Ovary (tissue), 10 donors: ENCODE measurements at regions of chr2 and their contacts with region 1.

Region 1: GRCh38 chr2:74919827-74920226 is 38.6 kb upstream of the POLE4 start:
- DNase-seq: peak; percentile 24 to 72 (median 64)
- H3K4me3 ChIP-seq: no peak overlapping the region
- H3K27ac ChIP-seq: no peak overlapping the region
- H3K4me1 ChIP-seq: no peaks in the 10 kb centered on the region
- H3K27me3 ChIP-seq: no peaks in the 10 kb centered on the region
- CTCF ChIP-seq: peak; percentile 49 to 58 (median 57)
- EP300 ChIP-seq: no peak
- POLR2A ChIP-seq: no peak

Region 2: DNA sequence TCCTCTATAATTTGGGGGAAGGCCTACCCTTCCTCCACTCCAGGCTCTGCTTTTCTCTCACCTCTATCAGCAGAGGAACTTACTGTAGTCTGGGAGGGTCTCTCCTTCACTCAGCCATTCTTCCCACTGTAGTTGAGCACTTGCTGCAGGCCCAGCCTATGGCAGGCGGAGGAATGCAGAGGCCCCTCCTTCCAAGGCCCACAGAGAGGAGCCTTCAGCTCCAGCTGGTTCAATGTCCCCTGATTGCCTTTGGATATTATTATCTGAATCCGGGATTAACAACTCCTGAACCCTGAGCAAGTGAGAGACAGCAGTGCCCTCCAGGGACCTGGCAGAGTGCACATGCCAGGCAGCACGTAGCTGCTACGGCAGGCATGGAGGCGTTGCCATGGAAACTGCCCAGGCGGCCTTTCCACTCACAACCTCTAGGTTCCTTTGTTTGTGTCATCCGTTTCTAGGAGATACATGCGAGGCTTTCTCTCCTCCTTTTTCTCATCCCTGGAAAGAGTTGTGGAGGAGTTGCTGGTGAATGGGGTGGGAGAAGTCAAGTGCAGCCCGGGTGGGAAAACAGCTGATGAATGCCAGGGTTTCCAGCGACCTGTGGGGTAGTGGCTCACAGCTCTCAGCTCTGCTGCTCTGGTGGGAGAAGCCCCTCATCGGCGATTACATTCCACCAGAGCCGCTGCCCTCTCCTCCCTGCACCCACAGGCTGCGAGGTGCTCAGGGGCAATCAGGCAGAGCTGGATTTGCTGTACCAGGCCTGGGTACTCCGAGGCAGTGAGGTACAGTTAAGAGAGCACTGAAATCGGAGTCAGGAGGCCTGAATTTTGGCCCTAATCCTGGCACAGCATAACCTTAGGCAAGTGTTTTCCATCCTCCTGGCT is 141.2 kb before region 1 on chr2:
- intact Hi-C with region 1: no loop called
- DNase-seq: peak in 1 of 5 donors; percentile 35
- H3K4me3 ChIP-seq: no peak overlapping the region
- H3K27ac ChIP-seq: no peak overlapping the region
- H3K4me1 ChIP-seq: no peaks in the 10 kb centered on the region
- H3K27me3 ChIP-seq: no peaks in the 10 kb centered on the region
- CTCF ChIP-seq: no peak
- EP300 ChIP-seq: no peak
- POLR2A ChIP-seq: no peak

Region 3: DNA sequence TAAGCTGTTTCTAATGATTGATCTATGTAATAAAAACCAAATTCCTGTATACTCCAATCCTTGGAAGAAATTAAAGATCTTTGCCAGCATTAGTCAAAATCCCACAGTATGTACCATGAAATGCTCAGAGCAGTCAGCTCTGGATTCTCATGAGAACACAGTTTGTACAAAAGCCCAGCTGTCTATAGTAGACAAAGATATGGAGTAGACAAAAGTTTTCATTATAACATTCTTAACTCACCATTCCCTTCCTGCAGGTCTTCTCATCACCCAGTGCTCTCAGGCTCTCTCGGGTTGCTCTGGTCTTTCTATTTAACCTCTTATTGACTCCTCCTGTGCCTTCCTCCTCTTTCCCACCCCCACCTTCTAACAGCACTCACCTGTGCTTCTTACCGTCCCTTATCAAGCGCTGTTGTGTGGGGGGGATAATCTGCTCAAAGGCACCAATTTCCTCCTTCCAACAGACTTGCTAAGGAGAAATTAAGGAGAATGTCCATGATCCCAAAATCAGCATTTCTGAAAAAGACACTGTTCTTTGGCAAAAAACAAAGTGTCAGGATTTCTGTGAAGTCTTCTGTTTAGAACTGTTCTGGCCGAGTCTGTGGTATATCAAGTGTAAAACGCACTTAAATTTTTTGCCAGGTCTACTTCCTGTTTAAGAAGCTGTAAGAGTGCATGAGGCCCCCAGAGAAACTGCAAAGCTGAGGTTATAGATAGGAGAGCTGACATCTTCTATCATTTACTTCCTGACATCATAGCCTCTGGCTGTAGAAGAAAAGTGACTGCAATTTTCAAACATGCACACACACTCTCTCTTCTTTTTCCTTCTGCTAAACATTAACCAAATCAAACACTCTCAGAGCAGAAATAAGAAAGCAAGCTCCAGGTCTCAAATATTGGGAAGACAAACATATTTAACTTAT is 496.9 kb after region 1 on chr2:
- intact Hi-C with region 1: loop called in 1 of 4 experiments (anchors 10 kb)
- DNase-seq: no peak
- H3K4me3 ChIP-seq: no peak overlapping the region
- H3K27ac ChIP-seq: no peak overlapping the region
- H3K4me1 ChIP-seq: no peaks in the 10 kb centered on the region
- H3K27me3 ChIP-seq: no peaks in the 10 kb centered on the region
- CTCF ChIP-seq: no peak
- EP300 ChIP-seq: no peak
- POLR2A ChIP-seq: no peak